Kidney (tissue), 22 donors: ENCODE measurements at regions of chr3 and their contacts with region 1.

Region 1: GRCh38 chr3:100254168-100254777 is 6.5 kb upstream of the TBC1D23 start:
- DNase-seq: peak in 4 of 5 donors; percentile 65 to 92 (median 70)
- H3K4me3 ChIP-seq: no peak overlapping the region
- H3K27ac ChIP-seq: no peak overlapping the region
- H3K4me1 ChIP-seq: no peaks in the 10 kb centered on the region
- H3K27me3 ChIP-seq: no peaks in the 10 kb centered on the region
- CTCF ChIP-seq: peak; percentile 84

Region 2: GRCh38 chr3:99836681-99837080 is 417.6 kb before region 1 on chr3:
- intact Hi-C with region 1: loop called (anchors 5 kb)
- DNase-seq: no peak
- H3K4me3 ChIP-seq: no peak overlapping the region
- H3K27ac ChIP-seq: no peak overlapping the region
- H3K4me1 ChIP-seq: peaks cover 0 to 3% (median 0%) of the 10 kb centered on the region in 3 donors
- H3K27me3 ChIP-seq: no peaks in the 10 kb centered on the region
- CTCF ChIP-seq: no peak

Region 3: GRCh38 chr3:100073899-100074307 is 180.4 kb before region 1 on chr3:
- intact Hi-C with region 1: loop called (anchors 10 kb)
- DNase-seq: peak in 4 of 5 donors; percentile 25 to 71 (median 54)
- H3K4me3 ChIP-seq: no peak overlapping the region
- H3K27ac ChIP-seq: no peak overlapping the region
- H3K4me1 ChIP-seq: peaks cover 5 to 22% (median 6%) of the 10 kb centered on the region in 3 donors
- H3K27me3 ChIP-seq: no peaks in the 10 kb centered on the region
- CTCF ChIP-seq: no peak